ENCODE measurements at regions of chr9 and their contacts with region 1.

Region 1: GRCh38 chr9:77291714-77292113 is 114.4 kb downstream of the VPS13A start:
- DNase-seq: no peak
- H3K4me3 ChIP-seq: no peak overlapping the region
- H3K27ac ChIP-seq: no peak overlapping the region
- H3K4me1 ChIP-seq: peaks cover 0 to 11% (median 2%) of the 10 kb centered on the region in 4 experiments; a peak in 4 of 7 replicates
- H3K27me3 ChIP-seq: no peaks in the 10 kb centered on the region
- CTCF ChIP-seq: peak in 2 of 3 experiments; percentile 62 to 71; a peak in 3 of 4 replicates
- EP300 ChIP-seq: no peak
- POLR2A ChIP-seq: no peak
- RAD21 ChIP-seq: peak; percentile 68 to 74

Region 2: DNA sequence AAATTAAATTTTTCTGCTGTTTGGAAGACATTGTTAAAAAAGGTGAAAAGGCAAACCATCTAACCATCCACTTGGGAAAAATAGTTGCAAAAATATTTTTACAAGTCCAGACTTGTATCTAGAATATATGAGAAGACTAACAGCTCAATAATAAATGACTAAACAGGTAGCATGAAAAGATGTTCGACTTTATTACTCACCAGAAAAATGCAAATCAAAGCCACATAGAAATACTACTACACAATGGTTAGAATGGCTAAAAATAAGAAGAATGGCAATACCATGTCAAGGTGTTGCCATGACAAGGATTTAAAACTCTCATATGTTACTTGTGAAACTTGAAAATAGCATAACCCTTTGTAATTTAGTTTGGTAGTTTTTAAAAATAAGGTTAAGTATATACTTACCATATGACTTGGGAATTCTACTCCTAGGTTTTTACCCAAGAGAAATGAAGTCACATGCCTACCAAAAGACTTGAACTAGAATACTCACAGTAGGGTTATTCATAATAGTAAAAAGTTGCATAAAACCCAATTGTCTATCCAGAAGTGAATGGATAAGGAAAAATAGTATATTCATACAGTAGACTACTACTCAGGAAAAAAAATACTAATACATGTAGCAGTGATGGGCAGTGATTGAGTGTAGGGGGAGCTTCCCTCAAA is 20.6 kb before region 1 on chr9:
- CTCF ChIA-PET with region 1: interaction called, 11 read pairs
- POLR2A ChIA-PET with region 1: no interaction called
- DNase-seq: no peak
- H3K4me3 ChIP-seq: no peak overlapping the region
- H3K27ac ChIP-seq: no peak overlapping the region
- H3K4me1 ChIP-seq: peaks cover 0 to 8% (median 4%) of the 10 kb centered on the region in 4 experiments; a peak in 3 of 7 replicates
- H3K27me3 ChIP-seq: no peaks in the 10 kb centered on the region
- CTCF ChIP-seq: no peak
- EP300 ChIP-seq: no peak
- POLR2A ChIP-seq: no peak
- RAD21 ChIP-seq: no peak

Region 3: DNA sequence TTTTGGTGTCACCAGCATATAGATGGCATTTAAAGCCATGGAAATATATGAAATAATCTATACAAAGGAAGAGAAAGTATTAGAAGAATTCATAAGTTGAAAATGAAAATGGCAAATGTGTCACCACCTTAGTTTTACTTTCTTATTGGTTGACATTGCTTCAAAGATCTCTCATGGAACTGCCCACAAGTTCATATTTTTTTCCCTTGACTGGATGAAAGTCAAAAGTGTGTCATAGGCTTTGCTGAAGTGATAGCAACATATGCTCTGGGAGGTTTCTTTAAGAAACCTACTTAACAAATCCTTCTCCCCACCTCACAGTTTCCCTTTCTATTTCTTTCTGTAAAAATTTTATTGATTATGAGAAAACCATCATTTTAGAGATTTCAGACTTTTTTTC is 12.8 kb after region 1 on chr9:
- CTCF ChIA-PET with region 1: interaction called, 34 read pairs
- POLR2A ChIA-PET with region 1: no interaction called
- DNase-seq: no peak
- H3K4me3 ChIP-seq: no peak overlapping the region
- H3K27ac ChIP-seq: no peak overlapping the region
- H3K4me1 ChIP-seq: no peaks in the 10 kb centered on the region
- H3K27me3 ChIP-seq: no peaks in the 10 kb centered on the region
- CTCF ChIP-seq: no peak
- EP300 ChIP-seq: no peak
- POLR2A ChIP-seq: no peak
- RAD21 ChIP-seq: no peak

Region 4: GRCh38 chr9:77402286-77402685 is 110.6 kb after region 1 on chr9:
- CTCF ChIA-PET with region 1: no interaction called
- POLR2A ChIA-PET with region 1: no interaction called
- DNase-seq: no peak
- H3K4me3 ChIP-seq: no peak overlapping the region
- H3K27ac ChIP-seq: no peak overlapping the region
- H3K4me1 ChIP-seq: no peaks in the 10 kb centered on the region
- H3K27me3 ChIP-seq: no peaks in the 10 kb centered on the region
- CTCF ChIP-seq: no peak
- EP300 ChIP-seq: no peak
- POLR2A ChIP-seq: no peak
- RAD21 ChIP-seq: no peak